ENCODE measurements at regions of chr9 and their contacts with region 1.

Region 1: DNA sequence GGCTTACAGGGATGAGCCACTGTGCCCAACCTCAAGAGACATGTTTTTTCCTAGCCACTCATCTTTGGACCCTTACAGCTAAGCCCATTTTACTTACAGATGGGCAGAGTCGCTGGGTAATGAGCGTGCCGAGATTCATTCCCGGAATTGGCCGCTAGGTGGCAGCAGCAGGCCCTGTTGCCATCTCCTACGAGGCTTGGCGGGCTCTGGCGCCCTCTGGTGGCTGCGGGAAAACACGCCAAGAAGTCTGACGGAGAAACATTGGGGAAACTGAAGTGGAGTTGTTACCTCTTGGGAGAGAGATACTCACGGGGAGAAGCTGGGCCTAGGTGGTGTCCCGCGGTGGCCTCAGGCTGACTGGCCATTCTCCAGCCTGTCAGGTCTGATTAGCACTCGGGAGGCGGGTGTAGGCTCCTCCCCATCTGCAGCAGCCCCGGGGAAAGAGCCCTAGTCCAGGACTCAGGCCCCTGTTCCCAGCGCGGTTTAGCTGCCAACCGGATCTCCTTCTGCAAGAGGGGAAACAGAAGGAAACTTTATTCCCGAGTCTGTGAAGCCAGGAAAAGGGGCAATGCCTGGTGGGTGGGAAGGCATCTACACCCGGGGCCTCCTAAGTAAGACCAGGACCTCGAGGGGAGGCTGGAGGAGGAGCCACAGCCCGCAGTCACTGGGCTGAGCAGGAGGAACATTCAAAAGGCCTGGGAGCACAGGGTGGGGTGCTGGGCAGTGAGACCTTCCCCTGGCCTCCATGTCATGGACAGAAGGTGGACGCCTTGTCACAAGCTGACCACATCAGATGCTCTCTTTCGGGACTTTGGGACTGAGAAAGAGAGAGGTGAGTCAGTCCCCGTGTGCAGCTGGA is 9.7 kb downstream of the PTGES2 start:
- DNase-seq: peak; percentile 93
- H3K4me3 ChIP-seq: no peak overlapping the region
- H3K27ac ChIP-seq: no peak overlapping the region
- H3K4me1 ChIP-seq: no peaks in the 10 kb centered on the region
- H3K27me3 ChIP-seq: no peaks in the 10 kb centered on the region
- CTCF ChIP-seq: peak; percentile 100
- POLR2A ChIP-seq: no peak

Region 2: GRCh38 chr9:128067876-128068613 is 49.8 kb before region 1 on chr9 and contains the start of gene SLC25A25:
- CTCF ChIA-PET with region 1: interaction called, 16 read pairs
- POLR2A ChIA-PET with region 1: no interaction called
- dilution Hi-C with region 1: no loop called
- intact Hi-C with region 1: loop called (anchors 1 kb)
- DNase-seq: peak; percentile 100
- H3K4me3 ChIP-seq: peak within 1 kb of the TSS; percentile 30 to 79 (median 75)
- H3K27ac ChIP-seq: peak within 1 kb of the TSS; percentile 96
- H3K4me1 ChIP-seq: peaks cover 25% of the 10 kb centered on the region
- H3K27me3 ChIP-seq: no peaks in the 10 kb centered on the region
- CTCF ChIP-seq: no peak
- POLR2A ChIP-seq: peak; percentile 61
- total RNA-seq, gene SLC25A25: 20.1 and 20.2 TPM in 2 replicates

Region 3: GRCh38 chr9:128088253-128088945 is 29.4 kb before region 1 on chr9:
- CTCF ChIA-PET with region 1: interaction called, 55 read pairs
- POLR2A ChIA-PET with region 1: no interaction called
- dilution Hi-C with region 1: no loop called
- intact Hi-C with region 1: loop called (anchors 1 kb)
- DNase-seq: no peak
- H3K4me3 ChIP-seq: no peak overlapping the region
- H3K27ac ChIP-seq: no peak overlapping the region
- H3K4me1 ChIP-seq: peaks cover 15% of the 10 kb centered on the region
- H3K27me3 ChIP-seq: no peaks in the 10 kb centered on the region
- CTCF ChIP-seq: no peak
- POLR2A ChIP-seq: no peak

Region 4: DNA sequence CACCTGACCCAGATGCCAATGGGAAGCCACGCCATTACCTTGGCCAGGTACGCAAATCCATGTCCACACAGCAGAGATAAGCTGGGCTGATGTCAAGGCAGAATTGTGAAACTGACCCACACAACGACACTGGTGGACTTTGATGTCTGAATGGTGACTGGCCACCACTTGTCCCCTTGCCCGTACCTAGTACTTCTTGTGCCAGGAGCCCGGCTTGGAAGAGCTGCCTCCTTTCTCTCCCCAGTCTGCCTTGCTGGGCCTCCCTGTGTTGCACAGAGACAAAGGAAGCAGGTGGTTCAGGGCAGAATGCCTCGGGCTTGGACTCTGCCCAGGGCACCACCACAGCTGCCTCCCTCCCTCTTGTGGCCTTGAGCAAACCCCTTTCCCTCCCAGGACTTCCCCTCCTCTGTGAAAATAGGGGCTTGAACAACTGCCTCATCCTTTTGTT is 13.6 kb before region 1 on chr9:
- CTCF ChIA-PET with region 1: interaction called, 56 read pairs
- POLR2A ChIA-PET with region 1: no interaction called
- dilution Hi-C with region 1: no loop called
- intact Hi-C with region 1: no loop called
- DNase-seq: peak; percentile 58
- H3K4me3 ChIP-seq: no peak overlapping the region
- H3K27ac ChIP-seq: no peak overlapping the region
- H3K4me1 ChIP-seq: peaks cover 21% of the 10 kb centered on the region
- H3K27me3 ChIP-seq: no peaks in the 10 kb centered on the region
- CTCF ChIP-seq: peak in 1 of 2 donors; percentile 13
- POLR2A ChIP-seq: no peak

Measured in endothelial cell of umbilical vein (primary cell).